CD8-positive, alpha-beta T cell (primary cell): ENCODE measurements at regions of chr7 and their contacts with region 1.

Region 1: DNA sequence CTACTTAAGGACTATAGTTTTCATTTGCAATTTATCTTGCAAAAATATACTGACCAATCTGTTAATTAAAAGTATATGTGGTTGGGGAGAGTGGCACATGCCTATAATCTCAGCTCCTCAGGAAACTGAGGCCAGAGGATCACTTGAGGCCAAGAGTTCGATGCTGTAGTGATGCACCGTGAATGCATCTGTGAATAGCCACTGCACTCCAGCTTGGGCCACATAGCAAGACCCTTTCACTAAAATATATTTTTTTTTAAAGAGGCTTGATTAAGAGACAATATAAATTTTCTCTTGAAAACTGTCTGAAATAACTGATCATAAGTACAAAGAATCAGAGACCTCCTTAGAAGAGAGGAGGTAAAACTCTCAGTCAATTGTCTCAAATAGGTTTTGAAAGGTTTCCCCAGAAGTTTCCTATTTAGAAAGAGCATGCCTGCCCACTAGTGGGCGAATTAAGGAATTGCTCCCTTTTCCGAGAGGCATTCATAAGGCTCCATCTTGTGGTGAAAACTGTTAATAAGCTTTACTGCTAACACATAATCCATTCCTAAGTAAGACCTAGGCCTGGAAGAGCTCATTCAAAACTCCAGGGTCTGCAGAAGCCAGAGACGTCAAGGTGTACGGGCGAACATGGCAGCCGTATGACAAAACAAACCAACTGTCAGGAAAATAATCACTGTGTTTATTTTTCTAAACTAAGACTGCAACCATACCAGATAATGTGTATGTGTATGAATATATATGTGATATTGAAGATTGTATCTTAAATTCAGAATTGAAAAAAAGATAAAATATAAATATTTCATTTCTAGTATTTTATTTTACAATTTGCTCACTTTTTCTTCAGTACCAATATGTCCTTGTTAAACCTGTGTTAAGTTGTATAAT is 6.8 kb upstream of the TAS2R40 start:
- DNase-seq: peak; percentile 25 to 87 (median 59)
- ATAC-seq: peak; percentile 98
- H3K4me3 ChIP-seq: no peak overlapping the region
- H3K4me3 Mint-ChIP-seq: no peak overlapping the region
- H3K27ac ChIP-seq: no peak overlapping the region
- H3K27ac Mint-ChIP-seq: no peak overlapping the region
- H3K4me1 ChIP-seq: no peaks in the 10 kb centered on the region
- H3K4me1 Mint-ChIP-seq: no peaks in the 10 kb centered on the region
- H3K27me3 ChIP-seq: no peaks in the 10 kb centered on the region
- H3K27me3 Mint-ChIP-seq: peaks cover 4% of the 10 kb centered on the region
- CTCF ChIP-seq: peak; percentile 100

Region 2: DNA sequence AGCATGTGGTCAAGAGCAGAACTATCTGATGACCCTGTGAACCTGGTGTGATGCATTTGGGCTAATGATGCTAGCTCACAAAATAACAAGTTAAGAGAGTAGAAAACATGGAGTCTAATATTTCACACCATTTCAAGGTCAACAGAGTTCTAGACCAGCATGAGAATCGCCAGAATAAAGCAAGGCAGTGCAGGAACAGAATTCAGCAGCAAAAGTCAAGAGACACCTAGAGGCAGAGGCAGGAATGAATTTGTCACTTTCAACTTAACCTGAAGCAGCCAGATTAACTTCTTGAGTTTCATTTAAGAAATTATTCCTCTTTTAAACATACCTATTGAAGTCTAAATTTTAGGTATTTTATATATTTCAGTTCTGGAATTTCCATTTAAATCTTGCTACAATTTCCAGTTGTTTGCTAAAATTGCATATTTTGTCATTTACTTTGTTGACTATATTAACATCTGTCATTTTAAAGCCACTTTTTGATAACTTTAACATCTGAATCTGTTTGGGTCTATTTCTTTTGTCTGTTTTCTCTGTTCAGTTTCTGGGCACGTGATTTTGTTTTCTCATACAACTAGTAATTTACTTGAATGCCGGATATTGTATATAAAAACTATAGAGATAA is 913.0 kb before region 1 on chr7:
- CTCF ChIA-PET with region 1: interaction called, 29 read pairs
- POLR2A ChIA-PET with region 1: no interaction called
- intact Hi-C with region 1: loop called (anchors 1 to 5 kb)
- DNase-seq: peak in 2 of 9 experiments; percentile 26 to 33
- ATAC-seq: no peak
- H3K4me3 ChIP-seq: no peak overlapping the region
- H3K4me3 Mint-ChIP-seq: no peak overlapping the region
- H3K27ac ChIP-seq: no peak overlapping the region
- H3K27ac Mint-ChIP-seq: no peak overlapping the region
- H3K4me1 ChIP-seq: peaks cover 16% of the 10 kb centered on the region
- H3K4me1 Mint-ChIP-seq: peaks cover 38% of the 10 kb centered on the region
- H3K27me3 ChIP-seq: peaks cover 0 to 4% of the 10 kb centered on the region in 2 experiments
- H3K27me3 Mint-ChIP-seq: peaks cover 16% of the 10 kb centered on the region
- CTCF ChIP-seq: peak; percentile 38

Region 3: GRCh38 chr7:142412551-142413193 is 802.4 kb before region 1 on chr7:
- CTCF ChIA-PET with region 1: interaction called, 4 read pairs
- POLR2A ChIA-PET with region 1: no interaction called
- intact Hi-C with region 1: loop called in 1 of 2 experiments (anchors 1 kb)
- DNase-seq: peak in 7 of 9 experiments; percentile 9 to 70 (median 26)
- ATAC-seq: peak; percentile 75
- H3K4me3 ChIP-seq: no peak overlapping the region
- H3K4me3 Mint-ChIP-seq: no peak overlapping the region
- H3K27ac ChIP-seq: no peak overlapping the region
- H3K27ac Mint-ChIP-seq: peak overlapping the region; percentile 49
- H3K4me1 ChIP-seq: no peaks in the 10 kb centered on the region
- H3K4me1 Mint-ChIP-seq: peaks cover 3% of the 10 kb centered on the region
- H3K27me3 ChIP-seq: no peaks in the 10 kb centered on the region
- H3K27me3 Mint-ChIP-seq: no peaks in the 10 kb centered on the region
- CTCF ChIP-seq: peak; percentile 71

Region 4: DNA sequence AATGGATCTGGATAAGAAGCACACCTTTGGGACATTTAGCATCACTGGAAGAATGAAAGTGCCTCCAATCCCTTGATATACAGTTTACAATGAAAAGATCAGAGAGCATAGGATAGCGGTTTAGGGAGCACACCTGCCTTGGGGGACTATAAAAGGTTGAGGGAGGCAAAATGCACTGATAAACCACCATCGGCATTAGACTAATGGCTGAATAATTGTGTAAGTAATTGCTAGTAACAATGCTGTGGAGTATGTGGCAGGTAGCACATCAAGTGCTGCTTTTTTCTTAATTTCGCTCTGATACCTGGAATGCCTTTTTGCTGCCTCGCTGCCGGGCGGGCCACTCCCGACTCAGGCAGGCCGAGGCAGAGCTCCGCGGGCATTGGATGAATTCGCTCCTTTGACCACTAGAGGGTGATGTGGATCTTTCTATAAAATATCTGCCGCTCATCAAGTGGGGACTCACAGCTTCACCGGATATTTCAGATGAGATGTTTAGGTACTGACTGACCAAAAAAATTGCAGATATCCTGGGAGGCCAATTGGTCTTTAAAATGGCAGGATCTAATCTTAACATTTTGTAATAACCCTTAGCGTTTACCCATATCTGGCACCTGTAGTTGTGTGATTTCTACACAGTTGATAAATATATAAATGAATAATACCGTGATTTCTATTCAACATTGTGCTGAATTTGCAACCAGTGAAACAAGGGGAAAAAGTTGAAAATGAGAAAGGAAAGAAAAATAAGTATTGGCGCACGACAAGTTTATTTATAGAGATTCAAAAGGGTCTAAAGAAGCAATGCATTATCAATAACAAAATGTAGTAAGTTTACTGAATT is 582.5 kb before region 1 on chr7:
- CTCF ChIA-PET with region 1: interaction called, 3 read pairs
- POLR2A ChIA-PET with region 1: no interaction called
- intact Hi-C with region 1: loop called (anchors 1 to 2 kb)
- DNase-seq: peak; percentile 10 to 82 (median 49)
- ATAC-seq: peak; percentile 51
- H3K4me3 ChIP-seq: no peak overlapping the region
- H3K4me3 Mint-ChIP-seq: no peak overlapping the region
- H3K27ac ChIP-seq: no peak overlapping the region
- H3K27ac Mint-ChIP-seq: peak overlapping the region; percentile 18
- H3K4me1 ChIP-seq: no peaks in the 10 kb centered on the region
- H3K4me1 Mint-ChIP-seq: peaks cover 13% of the 10 kb centered on the region
- H3K27me3 ChIP-seq: no peaks in the 10 kb centered on the region
- H3K27me3 Mint-ChIP-seq: peaks cover 2% of the 10 kb centered on the region
- CTCF ChIP-seq: peak; percentile 58

Region 5: GRCh38 chr7:142646386-142647140 is 568.5 kb before region 1 on chr7:
- CTCF ChIA-PET with region 1: no interaction called
- POLR2A ChIA-PET with region 1: no interaction called
- intact Hi-C with region 1: no loop called
- DNase-seq: peak in 1 of 9 experiments; percentile 14
- ATAC-seq: peak; percentile 8
- H3K4me3 ChIP-seq: peak overlapping the region in 1 of 2 experiments; percentile 5
- H3K4me3 Mint-ChIP-seq: peak overlapping the region; percentile 62
- H3K27ac ChIP-seq: peak overlapping the region in 1 of 2 experiments; percentile 15
- H3K27ac Mint-ChIP-seq: peak overlapping the region; percentile 52
- H3K4me1 ChIP-seq: no peaks in the 10 kb centered on the region
- H3K4me1 Mint-ChIP-seq: peaks cover 10% of the 10 kb centered on the region
- H3K27me3 ChIP-seq: no peaks in the 10 kb centered on the region
- H3K27me3 Mint-ChIP-seq: peaks cover 23% of the 10 kb centered on the region
- CTCF ChIP-seq: no peak

Region 6: DNA sequence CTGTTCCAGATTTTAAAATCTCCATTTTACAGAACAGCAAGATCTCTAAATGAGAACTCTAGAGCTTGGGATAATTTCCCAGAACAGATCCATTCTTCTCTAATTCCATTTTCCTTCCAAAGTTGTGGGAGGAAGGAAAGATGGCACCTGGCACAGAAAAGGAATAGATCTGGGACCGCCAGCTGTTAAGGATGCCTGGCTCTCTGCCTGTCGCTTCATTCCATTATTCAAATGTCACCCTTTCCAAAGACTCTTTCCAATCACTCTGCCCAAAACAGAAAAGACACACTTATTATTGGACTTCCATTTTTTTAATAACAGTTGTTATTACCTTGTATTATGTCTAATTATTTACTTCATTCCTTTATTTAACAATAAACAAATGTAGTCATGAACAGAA is 187.4 kb before region 1 on chr7:
- CTCF ChIA-PET with region 1: interaction called, 10 read pairs
- POLR2A ChIA-PET with region 1: no interaction called
- intact Hi-C with region 1: no loop called
- DNase-seq: no peak
- ATAC-seq: no peak
- H3K4me3 ChIP-seq: no peak overlapping the region
- H3K4me3 Mint-ChIP-seq: no peak overlapping the region
- H3K27ac ChIP-seq: no peak overlapping the region
- H3K27ac Mint-ChIP-seq: no peak overlapping the region
- H3K4me1 ChIP-seq: no peaks in the 10 kb centered on the region
- H3K4me1 Mint-ChIP-seq: no peaks in the 10 kb centered on the region
- H3K27me3 ChIP-seq: no peaks in the 10 kb centered on the region
- H3K27me3 Mint-ChIP-seq: peaks cover 2% of the 10 kb centered on the region
- CTCF ChIP-seq: no peak

Region 7: GRCh38 chr7:143263266-143264195 is 48.5 kb after region 1 on chr7 and contains the start of gene GSTK1:
- CTCF ChIA-PET with region 1: interaction called, 3 read pairs
- POLR2A ChIA-PET with region 1: no interaction called
- intact Hi-C with region 1: loop called in 1 of 2 experiments (anchors 5 kb)
- DNase-seq: peak; percentile 34 to 86 (median 79)
- ATAC-seq: peak; percentile 95
- H3K4me3 ChIP-seq: peak within 1 kb of the TSS; percentile 90 to 98
- H3K4me3 Mint-ChIP-seq: peak within 1 kb of the TSS; percentile 96
- H3K27ac ChIP-seq: peak within 1 kb of the TSS; percentile 70 to 80
- H3K27ac Mint-ChIP-seq: peak within 1 kb of the TSS; percentile 97
- H3K4me1 ChIP-seq: peaks cover 34% of the 10 kb centered on the region
- H3K4me1 Mint-ChIP-seq: peaks cover 63% of the 10 kb centered on the region
- H3K27me3 ChIP-seq: no peaks in the 10 kb centered on the region
- H3K27me3 Mint-ChIP-seq: no peaks in the 10 kb centered on the region
- CTCF ChIP-seq: no peak
- total RNA-seq, gene GSTK1: 200 to 208 TPM